Panc1 (cell line): ENCODE measurements at regions of chr19 and their contacts with region 1.

Region 1: DNA sequence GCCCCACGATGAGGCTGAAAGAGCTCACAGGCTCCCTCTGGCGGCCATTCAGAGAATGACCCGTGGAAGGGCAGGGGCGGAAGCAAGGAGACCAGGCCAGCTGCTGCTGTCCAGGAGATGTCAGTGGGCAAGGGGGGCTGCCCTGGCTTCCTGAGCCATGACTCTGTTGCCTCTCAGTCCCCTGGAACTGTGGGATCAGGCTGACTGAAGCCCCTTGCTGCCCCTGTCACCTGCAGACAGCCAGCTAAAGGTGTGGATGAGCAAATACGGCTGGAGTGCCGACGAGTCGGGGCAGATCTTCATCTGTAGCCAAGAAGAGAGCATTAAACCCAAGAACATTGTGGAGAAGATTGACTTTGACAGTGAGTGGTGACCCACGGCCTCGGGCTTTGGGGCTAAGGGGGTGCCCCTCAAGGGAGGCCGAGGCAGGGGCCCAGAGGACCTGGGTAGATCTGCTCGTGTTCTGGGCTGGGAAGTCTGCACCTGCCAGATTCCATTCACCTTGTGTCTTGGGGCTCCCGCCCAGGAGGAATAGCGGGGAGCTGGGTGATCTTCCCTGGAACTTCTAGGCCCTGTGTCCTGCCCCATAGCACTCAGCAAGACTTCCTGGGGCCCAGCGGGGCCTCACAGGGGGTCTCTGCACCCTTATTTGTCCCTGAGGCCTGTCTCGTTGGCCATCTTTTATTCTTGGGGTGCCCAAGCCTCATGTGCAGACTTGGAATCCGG is 12.5 kb upstream of the ACTN4 start:
- DNase-seq: no peak
- ATAC-seq: peak; percentile 73
- H3K4me3 ChIP-seq: no peak overlapping the region
- H3K27ac ChIP-seq: no peak overlapping the region
- H3K4me1 ChIP-seq: peaks cover 4% of the 10 kb centered on the region; the same call in 1 of the 2 replicates
- H3K27me3 ChIP-seq: no peaks in the 10 kb centered on the region
- CTCF ChIP-seq: no peak

Region 2: DNA sequence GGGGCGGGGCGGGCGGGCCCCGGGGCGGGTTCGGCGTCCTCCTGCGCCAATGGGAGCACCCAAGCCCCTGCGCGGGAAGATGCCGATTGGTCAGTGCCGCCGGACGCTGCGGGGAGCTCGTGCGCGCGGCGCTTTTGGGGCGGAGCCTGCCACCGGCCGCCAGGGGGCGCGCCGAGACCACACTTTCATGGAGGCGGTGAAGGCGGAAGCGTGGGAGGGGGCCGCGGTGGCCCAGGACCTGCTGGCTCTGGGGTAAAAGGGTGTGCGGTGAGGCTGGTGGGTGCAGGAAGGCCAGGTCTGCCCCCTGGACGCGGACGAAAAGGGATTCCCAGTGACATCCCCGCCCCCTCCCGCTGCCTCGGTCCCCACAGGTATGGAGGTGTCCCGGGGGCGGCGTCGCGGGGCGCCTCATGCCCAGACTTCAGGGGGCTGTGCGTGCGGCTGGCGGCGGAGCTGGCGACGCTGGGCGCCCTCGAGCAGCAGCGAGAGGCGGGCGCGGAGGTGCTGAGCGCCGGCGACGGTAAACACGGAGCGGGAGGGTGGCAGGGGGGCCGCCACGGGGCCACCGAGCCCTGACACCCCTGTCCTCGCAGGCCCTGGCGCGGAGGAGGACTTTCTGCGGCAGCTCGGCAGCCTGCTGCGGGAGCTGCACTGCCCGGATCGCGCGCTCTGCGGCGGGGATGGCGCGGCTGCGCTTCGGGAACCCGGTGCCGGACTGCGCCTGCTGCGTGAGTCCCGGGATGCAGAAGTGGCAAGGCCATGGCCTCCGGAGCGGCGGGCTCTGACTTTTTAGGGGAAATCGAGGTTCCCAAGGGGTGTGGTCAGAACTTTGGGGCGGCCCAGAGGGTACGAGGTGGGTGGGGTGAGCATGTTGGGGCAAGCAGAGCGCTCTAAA is 231.7 kb before region 1 on chr19 and contains the start of gene FAM98C:
- CTCF ChIA-PET with region 1: interaction called, 7 read pairs
- POLR2A ChIA-PET with region 1: interaction called, 4 read pairs
- in situ Hi-C with region 1: no loop called
- intact Hi-C with region 1: loop called (anchors 10 kb)
- DNase-seq: peak; percentile 81
- ATAC-seq: peak; percentile 98
- H3K4me3 ChIP-seq: peak within 1 kb of the TSS; percentile 73 to 87
- H3K27ac ChIP-seq: peak within 1 kb of the TSS; percentile 69
- H3K4me1 ChIP-seq: peaks cover 3% of the 10 kb centered on the region; the same call in 1 of the 2 replicates
- H3K27me3 ChIP-seq: no peaks in the 10 kb centered on the region
- CTCF ChIP-seq: peak; percentile 99
- total RNA-seq, gene FAM98C: 24.7 TPM

Region 3: DNA sequence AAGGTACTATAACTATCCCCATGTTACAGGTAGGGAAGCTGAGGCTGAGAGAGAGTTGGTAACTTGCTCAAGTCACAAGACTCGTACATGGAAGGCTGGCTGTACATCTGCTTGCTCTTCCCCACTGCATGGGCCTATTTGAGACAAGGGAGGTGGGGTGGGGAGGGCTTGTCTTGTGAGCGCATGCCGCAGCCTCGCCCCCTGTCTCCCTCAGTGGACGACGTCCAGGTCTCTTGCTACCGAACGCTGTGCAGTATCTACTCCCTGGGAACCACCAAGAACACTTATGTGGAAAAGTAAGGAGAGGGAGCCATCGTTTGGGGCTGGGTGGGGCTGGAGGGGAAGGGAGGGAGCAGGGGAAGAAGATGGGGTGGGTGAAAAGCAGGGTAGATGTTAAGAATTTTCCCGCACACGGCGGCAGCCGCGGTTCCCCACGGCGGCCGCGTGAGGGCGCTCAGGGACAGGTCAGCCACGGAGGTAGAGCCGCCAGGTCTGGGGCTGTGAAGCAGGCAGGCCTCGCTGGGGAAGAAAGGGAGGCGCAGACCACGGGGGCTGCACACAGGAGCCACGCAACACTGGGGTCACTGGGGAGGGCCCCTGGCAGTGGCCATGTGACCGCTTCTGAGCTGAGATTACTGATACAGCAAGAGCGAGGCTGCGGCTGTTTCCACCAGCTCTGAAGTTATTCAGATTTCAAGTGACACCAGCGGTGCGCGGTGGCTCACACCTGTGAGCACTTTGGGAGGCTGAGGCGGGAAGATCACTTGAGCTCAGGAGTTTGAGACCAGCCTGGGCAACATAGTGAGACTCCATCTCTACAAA is 119.9 kb before region 1 on chr19:
- CTCF ChIA-PET with region 1: interaction called, 27 read pairs
- POLR2A ChIA-PET with region 1: interaction called, 5 read pairs
- in situ Hi-C with region 1: no loop called
- intact Hi-C with region 1: loop called (anchors 1 kb)
- DNase-seq: peak; percentile 85
- ATAC-seq: peak; percentile 91
- H3K4me3 ChIP-seq: peak overlapping the region in 1 of 2 experiments; percentile 14; a peak in 2 of 4 replicates
- H3K27ac ChIP-seq: 0 out of 2 replicates have a peak overlapping the region, but pooled peaks have one; percentile 2
- H3K4me1 ChIP-seq: peaks cover 4% of the 10 kb centered on the region; the same call in 1 of the 2 replicates
- H3K27me3 ChIP-seq: no peaks in the 10 kb centered on the region
- CTCF ChIP-seq: no peak

Region 4: DNA sequence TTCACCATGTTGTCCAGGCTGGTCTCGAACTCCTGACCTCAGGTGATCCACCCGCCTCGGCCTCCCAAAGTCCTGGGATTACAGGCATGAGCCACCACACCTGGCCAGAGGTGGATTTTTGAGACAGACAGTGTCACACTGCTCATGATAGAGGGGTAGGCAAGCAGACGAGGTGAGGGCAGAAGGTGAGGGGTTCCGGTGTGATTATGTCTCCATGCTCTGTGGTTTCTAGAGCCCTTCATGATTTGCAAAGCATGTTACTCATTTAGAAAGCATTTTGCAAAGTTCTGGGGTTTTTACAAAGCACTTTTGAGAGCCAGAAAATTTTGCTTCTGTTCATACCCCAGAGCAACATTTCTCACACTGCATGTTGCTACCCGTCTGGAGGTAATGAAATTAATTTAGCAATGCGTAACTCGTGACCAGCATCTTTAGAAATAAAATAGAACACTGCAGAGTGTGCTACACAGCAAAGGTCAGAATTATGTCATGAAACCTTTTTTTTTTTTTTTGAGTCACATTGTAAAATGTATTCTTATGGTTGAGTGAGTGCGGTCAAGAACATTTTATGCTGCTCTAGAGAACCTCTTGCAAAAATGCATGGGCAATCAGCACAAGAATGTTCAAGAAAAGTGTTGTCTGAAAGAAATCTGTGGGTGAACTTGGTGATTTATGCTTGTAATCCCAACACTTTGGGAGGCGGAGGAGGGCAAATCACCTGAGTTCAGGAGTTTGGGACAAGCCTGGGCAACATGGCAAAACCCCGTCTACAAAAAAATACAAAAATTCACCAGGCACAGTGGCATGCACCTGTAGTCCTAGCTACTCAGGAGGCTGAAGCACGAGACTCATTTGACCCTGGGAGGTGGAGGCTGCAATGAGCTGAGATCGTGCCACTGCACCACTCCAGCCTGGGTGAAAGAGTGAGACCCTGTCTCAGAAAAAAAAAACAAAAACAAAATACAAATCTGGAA is 75.2 kb before region 1 on chr19:
- CTCF ChIA-PET with region 1: interaction called, 16 read pairs
- POLR2A ChIA-PET with region 1: interaction called, 3 read pairs
- in situ Hi-C with region 1: no loop called
- intact Hi-C with region 1: loop called (anchors 5 kb)
- DNase-seq: no peak
- ATAC-seq: no peak
- H3K4me3 ChIP-seq: no peak overlapping the region
- H3K27ac ChIP-seq: no peak overlapping the region
- H3K4me1 ChIP-seq: 0 out of 2 replicates have a peak, but pooled peaks cover 2% of the 10 kb centered on the region
- H3K27me3 ChIP-seq: no peaks in the 10 kb centered on the region
- CTCF ChIP-seq: no peak

Region 5: GRCh38 chr19:38618590-38619360 is 16.1 kb before region 1 on chr19 and contains the start of gene EIF3K:
- CTCF ChIA-PET with region 1: interaction called, 44 read pairs
- POLR2A ChIA-PET with region 1: interaction called, 21 read pairs
- in situ Hi-C with region 1: no loop called
- intact Hi-C with region 1: no loop called
- DNase-seq: peak; percentile 100
- ATAC-seq: peak; percentile 94
- H3K4me3 ChIP-seq: peak within 1 kb of the TSS; percentile 47 to 85
- H3K27ac ChIP-seq: peak within 1 kb of the TSS; percentile 96
- H3K4me1 ChIP-seq: peaks cover 16% of the 10 kb centered on the region
- H3K27me3 ChIP-seq: no peaks in the 10 kb centered on the region
- CTCF ChIP-seq: no peak
- total RNA-seq, gene EIF3K: 2,011 TPM

Region 6: GRCh38 chr19:38658462-38659306 is 23.8 kb after region 1 on chr19:
- CTCF ChIA-PET with region 1: interaction called, 8 read pairs
- POLR2A ChIA-PET with region 1: interaction called, 10 read pairs
- in situ Hi-C with region 1: no loop called
- intact Hi-C with region 1: no loop called
- DNase-seq: peak; percentile 100
- ATAC-seq: peak; percentile 59
- H3K4me3 ChIP-seq: peak overlapping the region; percentile 2 to 31; a peak in 3 of 4 replicates
- H3K27ac ChIP-seq: peak overlapping the region; percentile 96
- H3K4me1 ChIP-seq: peaks cover 100% of the 10 kb centered on the region
- H3K27me3 ChIP-seq: no peaks in the 10 kb centered on the region
- CTCF ChIP-seq: no peak

Region 7: DNA sequence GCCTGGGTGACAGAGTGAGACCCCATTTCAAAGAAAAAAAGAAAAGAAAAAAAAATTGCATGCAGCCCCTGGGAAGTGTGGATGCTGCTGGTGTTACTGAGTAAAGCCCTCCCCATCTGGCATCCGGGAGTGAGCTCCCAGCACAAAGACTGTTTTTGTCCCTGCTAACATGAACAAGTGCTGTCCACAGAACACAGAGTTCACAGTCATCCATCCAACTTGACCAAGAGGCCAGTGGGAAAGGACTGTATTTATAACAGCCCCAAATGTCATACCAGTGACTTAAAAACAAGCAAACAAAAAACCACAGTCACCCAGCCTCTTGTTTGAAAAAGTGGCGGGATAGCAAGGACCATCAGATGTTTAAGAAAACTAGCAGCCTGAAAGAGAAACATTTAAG is 329.8 kb after region 1 on chr19:
- CTCF ChIA-PET with region 1: interaction called, 12 read pairs
- POLR2A ChIA-PET with region 1: no interaction called
- in situ Hi-C with region 1: no loop called
- intact Hi-C with region 1: no loop called
- DNase-seq: no peak
- ATAC-seq: no peak
- H3K4me3 ChIP-seq: no peak overlapping the region
- H3K27ac ChIP-seq: no peak overlapping the region
- H3K4me1 ChIP-seq: peaks cover 7% of the 10 kb centered on the region
- H3K27me3 ChIP-seq: no peaks in the 10 kb centered on the region
- CTCF ChIP-seq: no peak